GM18951 (cell line): ENCODE measurements at regions of chr6 and their contacts with region 1.

Region 1: DNA sequence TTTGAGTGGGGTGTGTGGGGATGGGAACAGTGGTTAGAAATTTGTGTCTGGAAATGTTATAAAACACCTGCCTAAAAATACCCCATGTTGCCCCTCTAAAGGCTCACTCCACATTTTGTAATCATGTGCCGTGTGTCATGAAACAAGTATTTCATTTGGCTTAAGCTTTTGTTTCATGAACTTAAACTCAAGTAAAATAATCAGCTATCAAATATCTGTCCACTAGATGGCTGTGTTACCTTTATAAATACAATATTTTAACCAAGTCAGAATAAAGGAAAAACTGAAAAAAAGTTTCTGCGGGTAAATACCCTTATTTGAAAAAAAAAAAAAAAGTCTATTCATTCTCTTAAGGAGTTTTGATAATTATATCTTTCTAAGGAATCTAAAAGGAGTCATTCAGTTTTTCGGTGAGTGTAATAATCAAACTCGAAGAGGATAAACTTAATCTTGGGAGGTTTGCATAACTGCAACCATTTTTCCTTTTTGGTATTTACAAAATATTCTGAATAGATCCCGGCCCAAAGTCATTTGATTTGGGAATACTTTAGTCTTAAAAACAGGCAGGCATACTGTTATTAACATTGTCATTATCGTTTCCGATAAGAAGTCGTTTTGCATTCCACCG is 29.9 kb upstream of the MTRF1L start:
- POLR2A ChIP-seq: no peak

Region 2: GRCh38 chr6:152094992-152095592 is 937.3 kb before region 1 on chr6:
- in situ Hi-C with region 1: no loop called
- POLR2A ChIP-seq: no peak

Region 3: DNA sequence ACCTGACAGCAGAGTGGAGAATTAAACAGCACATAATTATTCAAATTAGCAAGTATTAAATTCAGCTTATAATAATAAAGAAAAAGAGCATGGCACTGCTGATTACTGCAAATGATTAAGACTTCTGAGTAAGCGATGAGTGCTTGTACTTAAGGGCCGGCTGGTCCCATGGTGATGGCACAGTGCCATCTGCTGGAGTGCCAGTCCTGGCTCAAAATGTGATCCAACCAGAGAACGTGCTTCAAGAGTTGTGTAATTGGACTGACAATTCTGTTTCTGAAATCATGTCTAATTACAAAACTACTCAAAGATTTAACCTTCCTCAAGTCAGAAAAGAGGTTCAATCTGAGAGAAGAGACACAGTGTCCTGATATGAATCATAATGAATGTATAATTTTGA is 280.3 kb after region 1 on chr6:
- in situ Hi-C with region 1: loop called (anchors 25 kb)
- POLR2A ChIP-seq: no peak